ENCODE measurements at regions of chr11 and their contacts with region 1.

Region 1: GRCh38 chr11:32893343-32894148 is 935 bp downstream of the QSER1 start:
- DNase-seq: peak; percentile 7 to 25
- ATAC-seq: peak; percentile 60 to 63
- H3K4me3 ChIP-seq: peak overlapping the region; percentile 78 to 96 (median 89)
- H3K27ac ChIP-seq: peak overlapping the region; percentile 81 to 92 (median 90)
- H3K4me1 ChIP-seq: peaks cover 18 to 19% of the 10 kb centered on the region in 2 donors
- H3K27me3 ChIP-seq: no peaks in the 10 kb centered on the region
- CTCF ChIP-seq: peak; percentile 4 to 62 (median 27)
- POLR2A ChIP-seq: no peak

Region 2: GRCh38 chr11:32583459-32584271 is 309.9 kb before region 1 on chr11 and contains the start of gene EIF3M:
- in situ Hi-C with region 1: loop called in 1 of 4 experiments (anchors 25 kb)
- intact Hi-C with region 1: loop called (anchors 5 kb)
- DNase-seq: peak; percentile 88 to 94
- ATAC-seq: peak; percentile 96 to 98
- H3K4me3 ChIP-seq: peak within 1 kb of the TSS; percentile 76 to 92 (median 80)
- H3K27ac ChIP-seq: peak within 1 kb of the TSS; percentile 76 to 88 (median 80)
- H3K4me1 ChIP-seq: peaks cover 21 to 24% of the 10 kb centered on the region in 2 donors
- H3K27me3 ChIP-seq: no peaks in the 10 kb centered on the region
- CTCF ChIP-seq: no peak
- POLR2A ChIP-seq: peak; percentile 55 to 71
- total RNA-seq, gene EIF3M: 335 to 393 (median 355) TPM

Region 3: DNA sequence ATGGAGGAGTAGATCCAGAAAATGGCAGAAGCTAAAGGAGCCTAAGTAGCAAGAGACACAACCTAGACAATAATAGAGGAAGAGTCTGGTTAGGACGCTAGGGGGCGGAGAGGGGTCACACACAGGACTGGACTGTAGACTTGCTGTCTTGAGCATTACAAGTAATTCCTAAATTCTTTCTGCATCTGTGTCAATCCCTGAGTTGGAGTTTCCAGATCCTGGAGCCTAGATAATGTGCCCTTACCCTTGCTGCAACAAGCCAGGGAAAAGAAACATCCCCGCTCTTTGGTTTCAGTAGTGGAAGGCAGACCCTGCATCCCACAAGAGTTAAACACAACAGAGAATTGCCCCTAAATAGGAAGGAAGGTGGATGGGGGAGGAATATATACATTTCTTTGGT is 84.2 kb before region 1 on chr11:
- in situ Hi-C with region 1: no loop called
- intact Hi-C with region 1: loop called (anchors 1 kb)
- DNase-seq: peak; percentile 8 to 18
- ATAC-seq: no peak
- H3K4me3 ChIP-seq: no peak overlapping the region
- H3K27ac ChIP-seq: no peak overlapping the region
- H3K4me1 ChIP-seq: no peaks in the 10 kb centered on the region
- H3K27me3 ChIP-seq: no peaks in the 10 kb centered on the region
- CTCF ChIP-seq: peak in 3 of 5 experiments; percentile 32 to 46 (median 40)
- POLR2A ChIP-seq: no peak

Region 4: GRCh38 chr11:33039274-33040032 is 145.9 kb after region 1 on chr11 and contains the start of gene TCP11L1:
- in situ Hi-C with region 1: loop called in 1 of 4 experiments (anchors 10 kb)
- intact Hi-C with region 1: loop called (anchors 2 kb)
- DNase-seq: peak; percentile 83 to 88
- ATAC-seq: peak; percentile 94 to 95
- H3K4me3 ChIP-seq: peak within 1 kb of the TSS; percentile 79 to 97 (median 91)
- H3K27ac ChIP-seq: peak within 1 kb of the TSS; percentile 90 to 95 (median 94)
- H3K4me1 ChIP-seq: peaks cover 6 to 15% of the 10 kb centered on the region in 2 donors
- H3K27me3 ChIP-seq: no peaks in the 10 kb centered on the region
- CTCF ChIP-seq: no peak
- POLR2A ChIP-seq: peak; percentile 51 to 64
- total RNA-seq, gene TCP11L1: 8.3 to 22.4 (median 19.0) TPM

Measured in gastrocnemius medialis (tissue), 4 donors.